ENCODE measurements at regions of chr18 and their contacts with region 1.

Region 1: DNA sequence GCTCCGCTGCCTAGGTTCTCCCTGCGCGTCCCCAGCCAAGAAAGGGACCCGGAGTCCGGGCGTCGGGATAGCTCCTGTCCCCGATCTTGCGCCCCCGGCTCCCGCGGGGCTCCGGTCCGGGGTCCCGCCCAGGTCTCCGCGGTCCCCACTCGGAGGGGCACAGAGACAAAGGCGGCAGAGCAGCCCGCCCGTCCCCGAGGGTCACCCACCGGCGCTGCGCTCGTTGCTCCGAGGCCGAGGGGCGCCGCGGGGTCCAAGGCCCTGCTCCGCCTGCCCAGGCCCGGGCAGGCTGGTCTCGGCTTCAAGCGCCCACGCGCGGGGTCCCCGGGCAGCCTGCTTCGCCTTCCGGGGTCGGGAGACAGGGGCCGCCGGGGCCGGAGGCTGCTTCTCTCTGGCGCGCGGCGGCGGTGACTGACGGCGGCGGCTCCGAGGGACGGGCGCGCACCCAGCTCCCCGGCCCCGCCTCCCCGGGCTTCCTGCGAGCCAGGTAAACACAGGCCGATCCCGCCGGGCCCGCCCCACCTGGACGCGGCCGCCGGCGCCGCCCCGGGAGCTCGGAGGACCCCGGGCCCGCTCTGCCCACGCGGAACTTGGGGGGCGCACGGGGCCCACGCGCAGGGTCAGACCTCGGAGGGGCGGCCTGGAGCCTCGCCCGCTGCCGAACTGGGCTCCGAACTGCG is at the start of gene MBP:
- DNase-seq: peak; percentile 64 to 79
- ATAC-seq: peak; percentile 43
- H3K4me3 ChIP-seq: peak within 1 kb of the TSS; percentile 76 to 92 (median 87)
- H3K27ac ChIP-seq: peak within 1 kb of the TSS; percentile 92 to 98 (median 95)
- H3K4me1 ChIP-seq: peaks cover 44 to 51% of the 10 kb centered on the region in 2 donors
- H3K27me3 ChIP-seq: no peaks in the 10 kb centered on the region
- CTCF ChIP-seq: no peak
- POLR2A ChIP-seq: peak; percentile 96
- total RNA-seq, gene MBP: 28.6 to 55.0 (median 50.4) TPM

Region 2: DNA sequence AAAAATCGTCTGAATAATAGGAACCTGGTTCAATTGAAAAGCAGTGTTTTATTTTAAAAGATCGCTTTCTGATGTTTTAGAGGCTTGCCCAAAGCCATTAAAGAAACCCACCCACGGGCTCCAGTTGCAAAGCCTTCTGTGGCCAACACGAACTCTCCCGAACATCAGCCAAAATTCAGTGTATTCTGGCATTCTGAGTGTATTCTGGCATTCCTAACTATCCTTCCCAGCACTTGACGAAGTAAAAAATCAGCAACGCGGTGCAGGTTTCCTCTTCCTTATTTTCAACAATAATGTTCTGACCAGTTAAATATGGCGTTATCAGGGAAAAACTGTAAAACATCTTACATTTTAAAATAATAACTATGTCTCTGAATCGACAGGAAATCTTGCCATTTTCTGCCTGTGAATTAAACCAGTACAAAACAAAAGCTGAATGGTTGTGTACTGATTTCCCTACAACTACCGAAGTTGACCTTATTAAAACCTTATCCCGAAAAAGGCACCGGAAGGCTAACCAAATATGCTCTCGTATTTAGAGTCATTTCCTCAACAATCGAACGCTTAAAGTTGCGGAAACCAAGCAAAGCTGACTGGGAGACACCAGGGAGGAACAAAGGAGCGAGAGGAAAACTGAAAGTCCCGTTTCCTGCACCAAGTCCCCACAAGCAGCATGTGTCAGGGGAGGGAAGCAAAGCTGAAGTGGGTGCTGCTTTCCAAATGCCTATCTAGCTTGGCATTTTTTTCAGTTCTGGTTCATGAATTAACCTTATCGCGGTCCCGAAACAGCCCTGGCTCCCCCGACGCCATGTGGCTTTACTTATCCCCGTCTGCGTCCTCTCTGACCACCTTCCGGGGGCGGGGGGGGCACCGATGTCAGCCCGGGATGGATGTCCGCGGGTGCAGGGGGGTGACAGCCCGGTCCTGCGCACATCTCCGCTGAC is 681.8 kb before region 1 on chr18:
- in situ Hi-C with region 1: no loop called
- intact Hi-C with region 1: loop called (anchors 10 kb)
- DNase-seq: peak; percentile 55 to 77
- ATAC-seq: peak; percentile 51 to 64
- H3K4me3 ChIP-seq: peak overlapping the region; percentile 70 to 85 (median 76)
- H3K27ac ChIP-seq: peak overlapping the region; percentile 85 to 92 (median 92)
- H3K4me1 ChIP-seq: peaks cover 66 to 72% of the 10 kb centered on the region in 2 donors
- H3K27me3 ChIP-seq: no peaks in the 10 kb centered on the region
- CTCF ChIP-seq: no peak
- POLR2A ChIP-seq: peak; percentile 26 to 51

Region 3: DNA sequence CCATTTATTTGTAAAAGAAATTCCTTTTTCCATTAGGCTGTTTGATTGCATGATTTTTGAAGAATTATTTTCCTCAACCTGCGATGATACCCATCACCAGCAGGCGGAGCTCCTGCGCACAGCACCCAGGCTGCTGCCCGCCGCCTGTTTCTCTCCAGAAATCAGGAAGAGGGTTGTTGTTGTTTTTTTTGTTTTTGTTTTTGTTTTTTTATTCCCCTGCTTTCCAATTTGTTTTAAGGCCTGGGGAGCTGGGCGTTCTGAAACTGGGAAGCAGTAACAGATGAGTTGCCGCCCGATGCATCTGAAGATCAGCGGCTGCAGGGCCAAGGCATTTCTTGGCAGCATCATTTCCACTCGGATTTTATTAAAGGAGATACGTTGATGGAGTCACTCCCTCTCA is 132.0 kb before region 1 on chr18:
- in situ Hi-C with region 1: no loop called
- intact Hi-C with region 1: loop called (anchors 1 kb)
- DNase-seq: peak in 1 of 2 donors; percentile 56
- ATAC-seq: peak; percentile 35 to 37
- H3K4me3 ChIP-seq: peak overlapping the region in 2 of 4 donors; percentile 4 to 19
- H3K27ac ChIP-seq: peak overlapping the region in 1 of 4 donors; percentile 50
- H3K4me1 ChIP-seq: peaks cover 0 to 5% of the 10 kb centered on the region in 2 donors
- H3K27me3 ChIP-seq: no peaks in the 10 kb centered on the region
- CTCF ChIP-seq: peak; percentile 92 to 99 (median 95)
- POLR2A ChIP-seq: no peak

Region 4: DNA sequence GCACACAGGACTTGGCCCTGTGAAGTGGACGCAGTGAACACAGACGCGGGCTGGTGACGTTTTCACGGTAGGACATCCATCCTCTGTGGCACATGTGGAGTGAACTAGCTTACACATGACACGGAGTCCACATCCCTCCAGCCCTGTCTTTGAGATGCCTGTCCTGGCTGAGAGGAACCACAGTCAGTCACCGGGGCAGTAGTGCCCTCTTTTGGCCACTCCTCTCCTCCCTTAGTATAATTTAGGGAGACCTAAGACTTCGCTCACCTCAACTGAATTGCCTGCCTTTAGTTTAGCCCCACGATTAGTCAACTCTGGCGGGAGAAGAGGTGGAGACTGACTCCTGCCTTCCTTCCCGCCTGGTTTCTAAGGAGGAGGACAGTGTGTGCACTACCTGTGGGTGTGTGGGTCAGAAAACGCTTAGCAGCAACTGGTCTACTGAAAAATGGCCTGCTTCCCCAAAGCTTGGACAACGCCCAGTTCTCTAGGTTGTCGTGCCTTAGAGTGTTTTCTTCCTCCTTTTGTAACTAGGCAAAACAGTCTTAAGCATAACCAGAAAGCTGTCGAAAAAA is 70.5 kb before region 1 on chr18:
- in situ Hi-C with region 1: loop called in 1 of 4 experiments (anchors 10 kb)
- intact Hi-C with region 1: loop called (anchors 2 kb)
- DNase-seq: peak in 1 of 2 donors; percentile 53
- ATAC-seq: peak in 1 of 2 donors; percentile 11
- H3K4me3 ChIP-seq: no peak overlapping the region
- H3K27ac ChIP-seq: peak overlapping the region; percentile 64 to 81 (median 76)
- H3K4me1 ChIP-seq: peaks cover 36 to 40% of the 10 kb centered on the region in 2 donors
- H3K27me3 ChIP-seq: no peaks in the 10 kb centered on the region
- CTCF ChIP-seq: peak in 3 of 5 experiments; percentile 3 to 30 (median 15)
- POLR2A ChIP-seq: no peak

Region 5: GRCh38 chr18:77087393-77088141 is 44.9 kb before region 1 on chr18:
- in situ Hi-C with region 1: loop called in 1 of 4 experiments (anchors 5 kb)
- intact Hi-C with region 1: loop called (anchors 1 kb)
- DNase-seq: no peak
- ATAC-seq: peak; percentile 13 to 16
- H3K4me3 ChIP-seq: peak overlapping the region; percentile 48 to 56 (median 50)
- H3K27ac ChIP-seq: peak overlapping the region; percentile 88 to 97 (median 94)
- H3K4me1 ChIP-seq: peaks cover 72 to 89% of the 10 kb centered on the region in 2 donors
- H3K27me3 ChIP-seq: no peaks in the 10 kb centered on the region
- CTCF ChIP-seq: no peak
- POLR2A ChIP-seq: no peak

Region 6: GRCh38 chr18:77207540-77207939 is 75.0 kb after region 1 on chr18:
- in situ Hi-C with region 1: no loop called
- intact Hi-C with region 1: loop called (anchors 2 kb)
- DNase-seq: peak; percentile 17 to 55
- ATAC-seq: peak; percentile 48 to 74
- H3K4me3 ChIP-seq: peak overlapping the region in 1 of 4 donors; percentile 35
- H3K27ac ChIP-seq: peak overlapping the region; percentile 51 to 77 (median 76)
- H3K4me1 ChIP-seq: peaks cover 0 to 32% of the 10 kb centered on the region in 2 donors
- H3K27me3 ChIP-seq: no peaks in the 10 kb centered on the region
- CTCF ChIP-seq: peak; percentile 38 to 62 (median 49)
- POLR2A ChIP-seq: no peak

Region 7: DNA sequence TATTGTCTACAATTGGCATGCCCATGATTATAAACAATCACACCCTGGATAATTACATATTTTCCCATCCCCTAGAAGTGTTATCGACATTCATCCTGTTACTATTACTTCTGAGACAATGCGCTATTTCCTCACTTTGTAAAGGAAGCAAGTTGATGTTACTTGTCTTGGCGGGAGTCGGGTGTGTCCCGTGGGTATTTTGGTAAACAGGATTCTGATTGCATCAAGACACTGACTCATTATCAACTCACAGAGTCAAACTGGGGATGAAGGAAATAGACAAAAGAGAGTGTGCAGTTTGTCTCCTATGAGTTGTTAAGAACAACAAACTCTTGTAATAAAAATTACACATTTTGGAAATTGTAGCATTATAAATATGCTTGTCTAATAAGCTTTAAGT is 259.8 kb after region 1 on chr18:
- in situ Hi-C with region 1: no loop called
- intact Hi-C with region 1: no loop called
- DNase-seq: no peak
- ATAC-seq: no peak
- H3K4me3 ChIP-seq: no peak overlapping the region
- H3K27ac ChIP-seq: no peak overlapping the region
- H3K4me1 ChIP-seq: no peaks in the 10 kb centered on the region
- H3K27me3 ChIP-seq: no peaks in the 10 kb centered on the region
- CTCF ChIP-seq: no peak
- POLR2A ChIP-seq: no peak